ENCODE measurements at regions of chr17 and their contacts with region 1.

Region 1: GRCh38 chr17:17919169-17920107 is 52.8 kb downstream of the TOM1L2 start:
- DNase-seq: no peak
- H3K4me3 ChIP-seq: no peak overlapping the region
- H3K27me3 ChIP-seq: no peaks in the 10 kb centered on the region
- CTCF ChIP-seq: peak; percentile 89

Region 2: DNA sequence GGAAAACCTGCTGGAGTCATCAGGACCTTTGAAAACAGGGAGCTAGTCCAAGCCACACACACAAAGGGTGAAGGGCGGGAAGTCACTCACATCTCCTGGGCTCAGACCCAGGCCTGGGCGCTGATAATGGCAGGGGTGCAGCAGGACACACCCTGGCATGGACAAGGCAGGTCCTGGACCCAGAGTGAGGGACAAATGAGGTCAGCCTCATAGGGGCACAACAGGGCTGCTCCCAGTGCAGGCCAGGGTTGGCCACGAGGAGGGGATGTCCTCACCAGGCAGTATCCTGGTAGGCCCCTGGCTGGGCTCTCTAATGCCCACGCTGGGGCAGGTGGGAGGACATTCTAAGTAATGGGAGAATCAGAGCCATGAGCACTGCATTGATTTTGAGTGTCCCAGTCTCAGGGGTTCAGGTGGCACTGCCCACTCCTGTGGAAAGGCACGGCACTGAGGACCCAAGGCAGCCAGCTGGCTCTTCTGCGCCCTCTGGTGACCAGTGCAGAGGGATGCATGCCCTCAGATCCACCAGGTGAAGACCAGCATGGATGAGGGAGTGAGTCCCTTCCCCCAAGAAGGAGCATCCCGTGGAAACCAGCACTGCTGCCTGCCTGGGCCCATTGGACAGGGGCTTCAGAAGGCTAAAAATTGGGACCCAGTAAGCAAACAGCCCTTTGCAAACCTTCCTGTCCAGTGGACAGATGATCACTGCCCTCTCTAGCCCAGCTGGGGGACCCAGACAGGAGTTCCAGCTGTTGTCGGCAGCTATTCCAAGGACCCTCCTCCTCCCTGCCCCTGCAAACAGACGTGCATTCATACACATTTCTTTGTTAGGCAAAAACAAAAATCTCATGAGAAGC is 59.3 kb before region 1 on chr17:
- CTCF ChIA-PET with region 1: interaction called, 19 read pairs
- POLR2A ChIA-PET with region 1: no interaction called
- DNase-seq: no peak
- H3K4me3 ChIP-seq: no peak overlapping the region
- H3K27me3 ChIP-seq: no peaks in the 10 kb centered on the region
- CTCF ChIP-seq: peak; percentile 96

Region 3: DNA sequence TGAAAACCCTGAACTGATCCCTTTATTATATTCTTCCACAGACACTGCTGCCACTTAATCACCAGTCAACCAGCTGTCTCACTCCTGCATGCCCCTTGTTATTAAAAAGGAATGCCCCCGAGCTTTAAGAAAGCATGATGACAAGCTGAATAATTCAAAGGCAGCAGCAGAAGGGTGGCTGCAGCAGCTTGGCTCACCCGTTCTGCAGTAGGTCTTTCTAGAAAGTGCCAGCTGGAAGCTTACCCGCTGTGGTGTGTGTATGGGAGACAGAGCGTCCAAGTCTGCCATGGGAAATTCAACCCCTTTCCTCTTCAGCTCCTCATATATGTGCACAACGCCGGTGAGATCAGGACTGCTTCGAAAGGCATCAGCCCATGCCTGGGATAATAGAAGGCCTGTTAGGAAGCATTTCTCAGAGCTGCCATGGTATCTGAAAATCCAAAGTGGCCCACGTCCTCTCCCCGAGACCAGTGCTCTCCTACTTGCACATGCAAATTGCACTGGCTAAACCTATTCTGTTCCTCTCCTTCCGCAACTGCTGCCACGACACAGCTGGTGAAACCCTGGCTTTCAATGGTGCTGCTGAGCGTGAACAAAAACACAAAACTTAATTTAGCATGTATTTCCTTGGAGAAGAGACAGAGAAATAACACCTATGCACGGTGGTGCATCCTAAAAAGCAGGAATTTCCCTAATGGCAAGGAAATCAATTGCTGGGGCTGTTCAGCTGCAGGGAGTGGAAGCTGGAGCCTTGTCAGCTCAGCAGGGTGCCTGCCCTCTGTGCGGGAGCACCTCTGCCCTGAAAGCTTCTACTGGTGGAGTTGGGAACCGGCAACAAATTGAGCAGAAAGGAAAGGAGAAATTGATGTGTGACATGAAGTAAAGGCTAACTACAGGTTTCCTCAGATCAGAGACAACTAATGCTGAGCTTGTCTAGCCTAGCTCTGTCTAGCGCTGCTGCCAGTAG is 34.8 kb before region 1 on chr17:
- CTCF ChIA-PET with region 1: interaction called, 88 read pairs
- POLR2A ChIA-PET with region 1: no interaction called
- DNase-seq: no peak
- H3K4me3 ChIP-seq: no peak overlapping the region
- H3K27me3 ChIP-seq: no peaks in the 10 kb centered on the region
- CTCF ChIP-seq: no peak

Region 4: DNA sequence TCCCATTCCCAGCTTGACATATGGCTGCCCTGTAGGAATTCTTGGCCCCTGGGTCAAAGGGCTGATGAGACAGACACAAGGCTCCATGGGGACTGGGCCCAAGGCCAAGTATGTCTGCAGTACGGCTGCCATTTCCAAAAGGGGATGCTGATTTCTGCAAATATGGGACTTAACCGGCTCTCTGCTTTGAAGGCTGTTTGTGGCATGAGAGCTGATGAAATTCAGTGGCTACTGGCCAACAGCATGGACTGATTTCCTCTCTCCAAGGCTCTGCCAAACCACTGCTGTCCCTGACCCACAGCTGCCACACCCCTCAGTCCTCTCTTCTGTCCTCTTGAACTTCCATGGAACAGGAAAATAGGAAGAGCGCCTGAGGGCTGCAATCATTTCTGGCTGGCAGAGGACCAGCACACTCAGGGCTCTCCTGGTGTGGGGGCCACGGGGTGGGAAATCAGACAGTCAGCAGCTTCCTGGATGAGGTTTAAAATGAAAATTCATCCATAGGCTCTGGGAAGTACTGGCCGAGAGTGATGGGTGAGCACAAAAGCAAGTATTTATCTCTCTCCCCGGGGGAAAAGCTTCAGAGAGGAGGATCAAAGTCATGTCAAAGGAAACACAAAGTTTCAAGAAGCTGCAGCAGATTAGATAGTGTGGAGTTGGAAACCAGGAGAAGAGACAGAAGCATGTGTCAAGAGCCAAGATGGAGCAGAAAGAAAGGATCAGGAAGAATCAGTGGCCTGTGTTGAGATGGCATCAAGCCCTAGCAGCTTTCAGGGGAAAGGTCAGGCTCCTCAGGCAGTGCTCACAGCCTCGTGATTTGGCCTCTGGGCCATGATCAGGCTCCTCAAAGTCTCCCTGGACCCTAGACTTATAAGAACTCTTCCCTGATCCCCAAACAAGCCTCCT is 18.6 kb before region 1 on chr17:
- CTCF ChIA-PET with region 1: interaction called, 22 read pairs
- POLR2A ChIA-PET with region 1: no interaction called
- DNase-seq: peak; percentile 98
- H3K4me3 ChIP-seq: no peak overlapping the region
- H3K27me3 ChIP-seq: no peaks in the 10 kb centered on the region
- CTCF ChIP-seq: no peak

Region 5: GRCh38 chr17:18033442-18034099 is 114.1 kb after region 1 on chr17:
- CTCF ChIA-PET with region 1: interaction called, 12 read pairs
- POLR2A ChIA-PET with region 1: no interaction called
- DNase-seq: no peak
- H3K4me3 ChIP-seq: no peak overlapping the region
- H3K27me3 ChIP-seq: no peaks in the 10 kb centered on the region
- CTCF ChIP-seq: peak; percentile 52